A673 (cell line): ENCODE measurements at regions of chr3 and their contacts with region 1.

Region 1: GRCh38 chr3:185830018-185830797 is 5.4 kb upstream of the IGF2BP2 start:
- DNase-seq: no peak
- H3K4me3 ChIP-seq: no peak overlapping the region
- H3K27ac ChIP-seq: no peak overlapping the region
- H3K4me1 ChIP-seq: peaks cover 4% of the 10 kb centered on the region
- H3K27me3 ChIP-seq: no peaks in the 10 kb centered on the region
- CTCF ChIP-seq: no peak

Region 2: DNA sequence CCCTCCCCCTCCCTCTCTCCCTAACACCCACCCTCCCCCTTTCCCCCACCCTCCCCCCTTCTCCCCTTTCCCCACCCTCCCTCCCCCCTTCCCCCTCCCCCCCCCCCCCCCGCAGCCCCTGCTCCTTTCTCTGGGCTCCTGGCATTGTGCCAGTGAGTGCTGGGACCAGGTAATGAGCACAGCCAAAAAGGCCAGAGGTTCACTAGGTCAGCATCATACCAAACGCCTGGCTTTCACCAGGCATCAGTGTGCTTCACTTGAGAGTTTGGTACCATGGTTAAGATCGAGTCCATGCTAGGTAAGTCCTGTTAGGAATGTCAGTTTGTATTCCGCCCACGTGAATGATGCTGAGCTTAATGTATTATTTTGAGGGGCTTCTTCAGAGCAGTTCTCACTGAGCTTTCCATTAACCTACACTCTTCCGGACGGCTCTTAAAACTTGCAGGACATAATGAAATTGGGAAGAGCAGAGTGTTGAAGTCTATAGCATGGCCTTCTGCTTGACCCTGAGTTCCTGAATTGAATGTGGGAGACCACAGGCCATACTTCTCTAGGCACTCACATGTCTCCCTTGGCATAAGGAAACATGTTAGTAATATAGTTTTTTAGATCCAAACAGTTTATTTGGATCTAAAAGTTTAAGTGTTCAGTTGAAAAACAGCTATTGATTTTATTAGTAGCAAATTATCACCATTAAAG is 198.6 kb before region 1 on chr3:
- CTCF ChIA-PET with region 1: no interaction called
- POLR2A ChIA-PET with region 1: interaction called, 16 read pairs
- intact Hi-C with region 1: no loop called
- DNase-seq: peak; percentile 16
- H3K4me3 ChIP-seq: no peak overlapping the region
- H3K27ac ChIP-seq: no peak overlapping the region
- H3K4me1 ChIP-seq: peaks cover 9% of the 10 kb centered on the region
- H3K27me3 ChIP-seq: no peaks in the 10 kb centered on the region
- CTCF ChIP-seq: no peak

Region 3: DNA sequence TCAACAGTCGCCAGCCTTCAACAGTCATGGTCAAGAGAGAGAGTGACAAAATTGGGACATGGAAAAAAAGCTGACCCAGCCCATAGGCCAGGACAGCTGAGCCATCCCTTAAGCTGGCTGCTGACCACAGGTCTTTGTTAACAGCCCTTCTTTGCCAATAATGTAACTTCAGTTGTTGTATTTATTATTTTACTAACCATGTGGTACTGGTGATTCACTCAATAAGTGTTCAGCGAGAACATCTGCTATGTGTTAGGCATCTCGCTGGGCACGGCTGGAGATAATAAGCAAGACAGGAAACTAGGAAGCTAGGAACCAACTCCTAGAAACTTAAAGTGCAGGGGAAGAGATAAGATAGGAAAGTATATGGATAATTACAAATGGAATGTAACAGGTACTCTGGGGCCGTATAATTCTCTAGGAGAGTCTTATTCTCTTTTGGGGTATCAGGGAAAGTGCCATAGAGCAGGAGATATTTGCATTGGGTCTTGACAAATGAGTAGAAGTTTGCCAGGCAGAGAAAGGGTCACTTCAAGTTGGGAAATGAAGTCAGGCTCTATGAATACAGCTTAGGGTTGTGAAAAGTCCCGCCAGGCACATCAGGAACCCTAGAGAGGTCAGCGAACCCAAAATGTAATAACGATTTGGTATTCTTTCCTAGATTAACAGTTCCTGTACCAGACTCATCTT is 191.6 kb after region 1 on chr3:
- CTCF ChIA-PET with region 1: no interaction called
- POLR2A ChIA-PET with region 1: no interaction called
- intact Hi-C with region 1: no loop called
- DNase-seq: peak; percentile 91
- H3K4me3 ChIP-seq: no peak overlapping the region
- H3K27ac ChIP-seq: peak overlapping the region; percentile 49
- H3K4me1 ChIP-seq: peaks cover 11% of the 10 kb centered on the region
- H3K27me3 ChIP-seq: no peaks in the 10 kb centered on the region
- CTCF ChIP-seq: no peak

Region 4: DNA sequence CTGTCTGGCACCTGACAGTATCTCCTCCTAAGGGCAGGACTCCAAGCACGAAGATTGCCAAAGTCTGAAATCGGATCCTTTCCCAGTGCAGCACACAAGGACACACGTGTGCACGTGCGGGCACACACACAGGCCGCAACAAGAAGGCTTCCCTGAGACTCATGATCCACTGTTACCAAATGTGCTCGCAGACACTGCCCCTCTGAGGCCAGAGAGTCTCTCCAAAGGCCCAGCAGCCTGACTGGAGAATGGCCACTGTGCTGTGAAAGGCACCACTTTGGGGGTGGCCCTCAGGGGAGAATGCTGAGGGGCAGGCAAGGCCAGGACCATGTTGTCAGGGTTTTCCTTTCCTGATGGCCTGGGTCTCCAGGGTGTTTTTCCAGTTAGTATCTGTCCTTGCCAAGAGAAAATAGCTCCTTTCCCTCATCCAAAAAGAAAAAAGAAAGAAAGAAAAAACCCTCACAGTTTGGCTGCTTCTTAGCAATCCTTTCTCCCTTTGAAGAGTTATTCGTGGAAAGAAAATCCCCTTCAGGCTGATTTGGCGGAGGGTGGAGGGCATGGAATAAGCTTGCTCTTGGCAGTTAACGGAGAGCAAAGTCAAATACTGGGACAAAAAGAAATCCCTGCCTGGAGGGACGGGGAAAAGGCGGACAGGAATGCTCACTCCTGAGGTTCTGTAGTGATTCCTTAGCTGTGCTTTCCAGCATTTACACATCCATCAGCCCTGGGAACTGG is 390.9 kb after region 1 on chr3:
- CTCF ChIA-PET with region 1: no interaction called
- POLR2A ChIA-PET with region 1: no interaction called
- intact Hi-C with region 1: no loop called
- DNase-seq: no peak
- H3K4me3 ChIP-seq: no peak overlapping the region
- H3K27ac ChIP-seq: no peak overlapping the region
- H3K4me1 ChIP-seq: peaks cover 3% of the 10 kb centered on the region
- H3K27me3 ChIP-seq: no peaks in the 10 kb centered on the region
- CTCF ChIP-seq: no peak